ENCODE measurements at regions of chr6 and their contacts with region 1.

Region 1: GRCh38 chr6:153231048-153231646 is 100.1 kb upstream of the RGS17 start:
- DNase-seq: peak; percentile 6
- CTCF ChIP-seq: peak; percentile 73

Region 2: GRCh38 chr6:153074761-153075160 is 156.4 kb before region 1 on chr6:
- CTCF ChIA-PET with region 1: no interaction called
- POLR2A ChIA-PET with region 1: no interaction called
- DNase-seq: no peak
- CTCF ChIP-seq: no peak

Region 3: GRCh38 chr6:153210083-153210482 is 21.1 kb before region 1 on chr6:
- CTCF ChIA-PET with region 1: interaction called, 10 read pairs
- POLR2A ChIA-PET with region 1: no interaction called
- DNase-seq: peak; percentile 16
- CTCF ChIP-seq: no peak

Region 4: GRCh38 chr6:153216789-153217188 is 14.4 kb before region 1 on chr6:
- CTCF ChIA-PET with region 1: interaction called, 15 read pairs
- POLR2A ChIA-PET with region 1: no interaction called
- DNase-seq: no peak
- CTCF ChIP-seq: no peak

Region 5: DNA sequence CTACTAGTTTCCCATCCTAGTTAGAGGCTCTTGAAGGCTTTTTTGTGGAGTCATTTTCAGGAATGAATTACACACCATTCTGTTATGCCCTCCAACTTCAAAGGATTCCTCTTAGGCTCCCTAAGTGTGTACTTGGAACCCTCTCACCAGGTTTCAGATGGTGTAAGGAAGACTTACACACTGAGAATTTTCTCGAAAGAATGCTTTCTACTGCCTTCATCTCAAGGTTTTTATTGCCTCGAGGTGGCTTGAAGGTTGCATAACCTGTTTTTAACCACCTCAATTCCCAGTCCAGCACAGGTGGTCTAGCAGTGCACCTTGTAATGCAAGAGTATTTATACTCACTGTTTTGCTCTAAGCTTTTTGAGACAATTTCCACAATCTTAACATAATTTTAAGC is 11.6 kb after region 1 on chr6:
- CTCF ChIA-PET with region 1: interaction called, 11 read pairs
- POLR2A ChIA-PET with region 1: no interaction called
- DNase-seq: no peak
- CTCF ChIP-seq: no peak

Measured in GM10248 (cell line).